ENCODE measurements at regions of chr2 and their contacts with region 1.

Region 1: DNA sequence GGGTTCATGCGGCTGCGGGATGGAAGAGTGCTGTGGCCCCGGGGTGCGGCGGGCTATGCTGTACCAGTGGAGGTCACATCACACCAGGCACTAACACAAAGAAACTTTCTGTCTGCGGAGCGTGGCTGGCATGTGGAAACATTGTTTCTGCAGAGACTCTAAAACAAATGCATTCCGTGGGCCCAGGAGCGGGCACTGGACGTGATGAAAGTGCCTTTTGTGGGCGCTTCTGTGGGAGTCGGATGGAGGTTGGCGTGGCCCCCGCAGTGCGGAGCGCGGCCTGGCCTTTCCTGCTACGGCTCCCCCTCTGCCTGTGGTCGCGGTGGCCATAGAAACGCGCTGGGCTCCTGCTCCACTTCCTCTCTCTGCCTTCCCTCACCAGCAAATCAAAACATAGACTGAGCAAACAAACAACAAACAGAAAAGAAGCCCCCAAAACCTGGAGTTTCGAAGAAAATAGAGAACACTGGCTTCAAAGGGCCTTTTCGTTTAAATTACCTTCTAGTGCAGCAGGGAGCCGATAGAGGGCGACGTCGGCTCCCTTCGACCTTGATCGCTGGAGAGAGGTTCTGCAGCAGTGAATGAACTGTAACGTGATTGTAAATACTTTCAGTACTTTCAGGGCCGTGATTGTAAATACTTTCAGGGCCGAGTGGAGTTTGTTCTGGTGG is 51.4 kb downstream of the KIF5C start:
- DNase-seq: peak; percentile 44 to 90 (median 72)

Region 2: GRCh38 chr2:148874868-148875341 is 51.5 kb before region 1 on chr2 and contains the start of gene KIF5C:
- intact Hi-C with region 1: loop called (anchors 10 kb)
- DNase-seq: peak; percentile 82 to 98 (median 94)

Measured in head of caudate nucleus (tissue), 42 donors.